ENCODE measurements at regions of chr13 and their contacts with region 1.

Region 1: DNA sequence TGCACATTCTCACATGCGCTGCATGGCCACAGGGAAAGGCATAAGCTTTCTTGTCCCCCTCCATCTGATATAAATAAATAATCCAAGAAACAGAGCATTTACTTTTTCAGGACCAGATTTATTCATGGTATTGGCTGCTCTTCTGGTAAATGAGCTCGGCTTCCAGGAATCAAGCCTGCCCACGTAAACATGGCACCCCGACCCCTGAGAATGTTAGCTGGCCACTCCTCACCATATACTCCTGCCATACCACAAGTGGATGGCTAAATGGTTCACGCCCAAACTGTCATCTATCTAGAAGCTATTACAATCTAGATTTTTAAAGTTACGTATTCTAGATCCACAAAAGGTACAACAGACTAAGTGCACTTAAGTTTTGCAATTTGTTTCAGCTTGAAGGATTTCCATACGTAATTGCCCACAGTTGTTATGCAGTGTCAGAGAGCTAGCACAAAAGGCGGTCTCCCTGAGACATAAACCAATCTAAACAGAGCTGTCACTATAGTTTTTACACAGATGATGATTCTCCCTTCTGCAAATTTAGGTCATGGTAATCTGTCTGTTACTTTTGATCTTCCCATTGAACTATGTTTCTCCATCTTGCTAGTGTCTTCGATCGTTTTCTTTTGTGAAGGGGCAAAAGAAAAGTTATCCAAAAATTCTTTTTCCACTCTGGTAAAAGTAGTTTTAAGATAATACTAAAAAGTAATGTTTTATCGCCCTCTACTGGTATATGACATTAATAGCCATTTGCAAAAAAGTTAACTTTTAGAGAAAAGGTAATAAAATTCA is 16.2 kb upstream of the FOXO1 start:
- DNase-seq: no peak
- ATAC-seq: peak; percentile 74
- H3K4me3 Mint-ChIP-seq: no peak overlapping the region
- H3K27ac Mint-ChIP-seq: no peak overlapping the region
- H3K4me1 Mint-ChIP-seq: peaks cover 7% of the 10 kb centered on the region
- H3K27me3 Mint-ChIP-seq: no peaks in the 10 kb centered on the region
- CTCF ChIP-seq: peak; percentile 78

Region 2: GRCh38 chr13:39777527-39778061 is 905.1 kb before region 1 on chr13:
- CTCF ChIA-PET with region 1: interaction called, 3 read pairs
- POLR2A ChIA-PET with region 1: no interaction called
- intact Hi-C with region 1: loop called (anchors 5 kb)
- DNase-seq: peak; percentile 72
- ATAC-seq: peak; percentile 83
- H3K4me3 Mint-ChIP-seq: no peak overlapping the region
- H3K27ac Mint-ChIP-seq: peak overlapping the region; percentile 94
- H3K4me1 Mint-ChIP-seq: peaks cover 57% of the 10 kb centered on the region
- H3K27me3 Mint-ChIP-seq: no peaks in the 10 kb centered on the region
- CTCF ChIP-seq: peak; percentile 60

Region 3: DNA sequence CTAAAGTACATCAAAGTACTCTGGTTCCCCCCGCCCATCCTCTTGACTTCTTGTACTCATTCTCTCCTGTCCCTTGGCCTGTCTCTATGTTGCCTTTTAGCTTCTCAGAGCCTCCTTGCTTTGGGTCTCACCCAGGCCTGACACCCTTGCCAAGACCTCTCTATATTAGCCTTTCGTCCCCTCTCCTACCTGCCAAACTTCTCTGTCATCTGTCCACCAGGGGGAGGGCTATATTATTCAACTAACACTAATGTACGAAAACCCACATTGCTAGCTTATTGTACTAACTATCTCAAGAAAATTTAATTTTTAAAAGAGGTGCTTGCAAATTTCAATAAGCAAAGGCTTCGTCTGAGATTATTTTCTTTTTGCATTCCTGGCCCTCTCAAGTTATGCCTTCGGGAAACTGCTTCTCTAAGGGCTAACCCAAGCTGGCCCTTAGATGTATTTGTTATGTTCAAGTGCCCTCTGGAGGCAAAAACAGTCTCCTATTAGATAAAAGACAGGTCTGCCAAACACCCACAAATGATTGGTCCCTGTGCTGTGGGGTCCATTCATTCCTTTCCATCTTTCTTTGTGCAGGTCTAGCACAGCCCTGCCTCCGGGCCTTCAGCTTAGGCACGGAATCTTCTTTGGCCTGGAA is 94.6 kb after region 1 on chr13:
- CTCF ChIA-PET with region 1: interaction called, 15 read pairs
- POLR2A ChIA-PET with region 1: no interaction called
- intact Hi-C with region 1: no loop called
- DNase-seq: peak; percentile 60
- ATAC-seq: peak; percentile 66
- H3K4me3 Mint-ChIP-seq: peak overlapping the region; percentile 62
- H3K27ac Mint-ChIP-seq: peak overlapping the region; percentile 100
- H3K4me1 Mint-ChIP-seq: peaks cover 33% of the 10 kb centered on the region
- H3K27me3 Mint-ChIP-seq: no peaks in the 10 kb centered on the region
- CTCF ChIP-seq: peak; percentile 93

Region 4: GRCh38 chr13:41132512-41133152 is 450.0 kb after region 1 on chr13 and contains the start of gene KBTBD6:
- CTCF ChIA-PET with region 1: no interaction called
- POLR2A ChIA-PET with region 1: no interaction called
- intact Hi-C with region 1: no loop called
- DNase-seq: peak; percentile 98
- ATAC-seq: peak; percentile 95
- H3K4me3 Mint-ChIP-seq: peak within 1 kb of the TSS; percentile 94
- H3K27ac Mint-ChIP-seq: peak within 1 kb of the TSS; percentile 94
- H3K4me1 Mint-ChIP-seq: peaks cover 47% of the 10 kb centered on the region
- H3K27me3 Mint-ChIP-seq: no peaks in the 10 kb centered on the region
- CTCF ChIP-seq: no peak
- total RNA-seq, gene KBTBD6: 3.9 to 4.5 TPM

Measured in activated CD8-positive, alpha-beta T cell treated with anti-CD3 and anti-CD28 coated beads for 36 hours (primary cell).